ENCODE measurements at regions of chr2 and their contacts with region 1.

Region 1: DNA sequence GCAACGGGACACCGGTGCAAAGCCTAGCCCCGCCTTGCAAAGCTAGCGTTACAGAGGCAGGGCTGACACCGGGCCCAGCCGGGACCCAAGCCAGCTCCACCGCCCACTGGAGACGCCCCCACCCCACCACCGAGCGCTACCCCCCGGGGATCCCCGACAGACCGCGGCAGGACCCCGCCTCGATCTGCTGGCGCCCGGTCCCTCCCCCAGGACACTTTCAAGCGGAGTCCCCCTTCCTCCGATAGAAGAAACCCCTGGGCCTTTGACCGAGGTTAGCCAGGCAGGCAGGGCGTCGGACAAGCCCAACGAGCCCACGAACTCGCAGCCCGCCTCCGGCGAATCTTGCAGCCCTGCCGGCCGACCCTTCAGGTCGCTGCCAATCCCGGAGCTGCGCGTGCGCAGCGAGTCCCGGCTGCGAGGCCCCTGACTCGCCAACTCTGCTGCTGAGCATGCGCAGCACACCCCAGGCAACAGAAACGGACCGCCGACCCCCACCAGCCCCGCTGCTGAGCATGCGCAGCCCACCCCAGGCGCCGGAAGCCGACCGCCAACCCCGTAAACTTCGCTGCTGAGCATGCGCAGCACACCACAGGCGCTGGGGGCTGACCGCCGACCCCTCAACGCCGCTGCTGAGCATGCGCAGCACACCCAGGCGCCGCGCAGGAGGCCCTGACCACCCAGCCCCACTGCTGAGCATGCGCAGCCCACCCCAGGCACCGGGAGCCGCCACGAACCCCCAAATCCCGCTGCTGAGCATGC is 656 bp downstream of the ADI1 start:
- DNase-seq: peak; percentile 99 to 100
- ATAC-seq: peak; percentile 95 to 96 (median 96)
- H3K4me3 ChIP-seq: peak overlapping the region; percentile 92
- H3K27ac ChIP-seq: peak overlapping the region; percentile 99
- H3K4me1 ChIP-seq: peaks cover 29% of the 10 kb centered on the region
- H3K27me3 ChIP-seq: no peaks in the 10 kb centered on the region
- CTCF ChIP-seq: no peak

Region 2: GRCh38 chr2:3288470-3289163 is 230.1 kb before region 1 on chr2:
- intact Hi-C with region 1: no loop called
- DNase-seq: no peak
- ATAC-seq: no peak
- H3K4me3 ChIP-seq: no peak overlapping the region
- H3K27ac ChIP-seq: no peak overlapping the region
- H3K4me1 ChIP-seq: no peaks in the 10 kb centered on the region
- H3K27me3 ChIP-seq: no peaks in the 10 kb centered on the region
- CTCF ChIP-seq: no peak

Region 3: GRCh38 chr2:3536682-3537632 is 18.3 kb after region 1 on chr2:
- intact Hi-C with region 1: loop called in 1 of 2 experiments (anchors 2 kb)
- DNase-seq: peak; percentile 55 to 71
- ATAC-seq: peak; percentile 43 to 82 (median 70)
- H3K4me3 ChIP-seq: peak overlapping the region; percentile 59
- H3K27ac ChIP-seq: peak overlapping the region; percentile 89
- H3K4me1 ChIP-seq: peaks cover 4% of the 10 kb centered on the region
- H3K27me3 ChIP-seq: no peaks in the 10 kb centered on the region
- CTCF ChIP-seq: peak; percentile 36

Region 4: GRCh38 chr2:3624059-3624794 is 105.6 kb after region 1 on chr2:
- intact Hi-C with region 1: no loop called
- DNase-seq: no peak
- ATAC-seq: no peak
- H3K4me3 ChIP-seq: no peak overlapping the region
- H3K27ac ChIP-seq: no peak overlapping the region
- H3K4me1 ChIP-seq: no peaks in the 10 kb centered on the region
- H3K27me3 ChIP-seq: no peaks in the 10 kb centered on the region
- CTCF ChIP-seq: no peak

Measured in psoas muscle (tissue), 8 donors.